SK-MEL-5 (cell line): ENCODE measurements at regions of chr4 and their contacts with region 1.

Region 1: DNA sequence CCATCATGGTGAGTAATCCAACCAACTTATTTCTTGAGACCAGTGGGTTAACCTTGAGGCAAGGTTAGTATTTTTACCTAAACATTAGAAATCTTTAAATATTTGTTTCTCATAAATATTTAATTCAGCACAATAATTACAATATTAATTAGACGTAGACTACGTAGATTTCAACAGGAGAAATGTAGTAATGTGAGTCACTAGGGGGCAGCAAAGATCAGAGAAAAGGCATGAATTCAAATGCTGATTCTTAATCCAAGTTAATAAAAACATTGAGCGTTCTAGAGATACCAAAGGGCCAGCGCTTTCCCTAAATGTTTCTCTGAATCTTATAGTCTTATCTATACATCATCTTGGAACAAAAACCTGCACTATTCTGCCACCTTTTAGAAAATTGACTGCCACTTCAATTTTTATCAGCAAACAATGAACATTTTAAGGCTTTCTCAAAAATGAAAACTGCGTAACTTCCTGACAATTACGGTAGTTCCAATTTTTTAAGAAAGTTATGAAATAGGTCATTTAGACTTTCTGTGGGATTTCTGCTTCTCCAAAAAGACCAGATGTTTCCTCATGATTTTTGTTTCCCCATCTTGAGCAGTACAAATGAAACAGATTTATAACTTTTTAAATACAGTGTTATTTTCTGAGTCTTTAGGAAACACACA is 180.7 kb downstream of the GASK1B start:
- DNase-seq: peak; percentile 83

Region 2: GRCh38 chr4:157792716-157793115 is 199.5 kb before region 1 on chr4:
- in situ Hi-C with region 1: no loop called
- DNase-seq: no peak

Region 3: GRCh38 chr4:158161551-158162354 is 169.6 kb after region 1 on chr4:
- in situ Hi-C with region 1: no loop called
- DNase-seq: peak; percentile 90

Region 4: DNA sequence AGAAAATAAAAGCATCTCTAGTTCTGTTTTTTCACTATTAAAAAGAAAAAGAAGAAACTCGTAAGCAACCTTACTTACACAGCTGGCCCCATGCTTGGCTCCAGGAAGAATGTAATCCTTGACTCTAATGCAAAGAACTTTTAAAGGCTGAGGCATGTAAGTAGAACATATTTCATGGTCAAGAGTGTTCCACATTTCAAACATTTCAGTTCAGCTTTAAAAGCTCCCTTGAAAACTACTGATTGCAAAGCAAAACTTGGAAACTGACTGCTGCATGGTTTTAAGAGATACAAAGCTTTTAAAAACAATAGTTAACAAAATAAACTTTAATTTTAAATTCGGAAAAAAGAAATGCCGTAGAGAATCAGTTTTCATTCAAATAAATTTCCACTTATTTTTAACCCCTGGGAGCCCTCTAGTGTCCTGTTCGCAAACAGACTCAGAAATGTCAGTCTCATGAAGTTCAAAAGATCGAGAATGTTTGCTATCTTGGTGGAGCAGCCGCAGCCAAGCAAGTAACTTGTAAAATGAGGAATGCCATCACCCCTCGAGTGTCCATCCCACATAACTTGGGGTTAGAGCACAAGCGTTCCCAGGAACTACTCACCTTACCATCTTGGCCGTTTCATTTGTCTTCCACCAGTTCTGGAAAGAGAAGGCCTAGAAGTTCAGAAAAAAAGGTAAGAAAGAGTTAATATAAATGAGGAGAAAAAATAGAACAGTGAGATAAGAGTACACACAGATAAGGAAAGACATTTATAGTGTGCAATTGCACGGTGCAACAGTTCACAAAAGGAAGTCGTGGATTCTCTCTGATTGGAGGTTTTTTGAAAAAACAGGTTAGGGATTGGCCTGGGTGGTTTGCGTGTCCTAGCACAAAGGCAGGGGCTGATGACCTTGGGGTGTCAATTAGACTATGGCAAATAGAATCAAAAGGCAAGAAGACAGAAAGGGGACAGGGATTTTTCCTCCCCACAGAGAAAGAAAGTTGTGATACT is 180.4 kb after region 1 on chr4 and contains the start of gene GASK1B:
- in situ Hi-C with region 1: loop called (anchors 10 kb)
- DNase-seq: peak; percentile 73
- total RNA-seq, gene GASK1B: 11.7 and 12.8 TPM in 2 replicates